PC-9 (cell line): ENCODE measurements at regions of chr14 and their contacts with region 1.

Region 1: GRCh38 chr14:41235466-41235865 is 371.2 kb upstream of the LRFN5 start:
- DNase-seq: no peak
- H3K4me3 ChIP-seq: no peak overlapping the region
- H3K27ac ChIP-seq: no peak overlapping the region
- H3K4me1 ChIP-seq: no peaks in the 10 kb centered on the region
- H3K27me3 ChIP-seq: no peaks in the 10 kb centered on the region
- CTCF ChIP-seq: no peak

Region 2: GRCh38 chr14:41201721-41202120 is 33.7 kb before region 1 on chr14:
- CTCF ChIA-PET with region 1: no interaction called
- POLR2A ChIA-PET with region 1: no interaction called
- intact Hi-C with region 1: no loop called
- DNase-seq: no peak
- H3K4me3 ChIP-seq: no peak overlapping the region
- H3K27ac ChIP-seq: no peak overlapping the region
- H3K4me1 ChIP-seq: no peaks in the 10 kb centered on the region
- H3K27me3 ChIP-seq: no peaks in the 10 kb centered on the region
- CTCF ChIP-seq: no peak

Region 3: GRCh38 chr14:41299924-41300323 is 64.5 kb after region 1 on chr14:
- CTCF ChIA-PET with region 1: no interaction called
- POLR2A ChIA-PET with region 1: no interaction called
- intact Hi-C with region 1: loop called (anchors 10 kb)
- DNase-seq: no peak
- H3K4me3 ChIP-seq: no peak overlapping the region
- H3K27ac ChIP-seq: no peak overlapping the region
- H3K4me1 ChIP-seq: no peaks in the 10 kb centered on the region
- H3K27me3 ChIP-seq: no peaks in the 10 kb centered on the region
- CTCF ChIP-seq: no peak